ENCODE measurements at regions of chr1 and their contacts with region 1.

Region 1: DNA sequence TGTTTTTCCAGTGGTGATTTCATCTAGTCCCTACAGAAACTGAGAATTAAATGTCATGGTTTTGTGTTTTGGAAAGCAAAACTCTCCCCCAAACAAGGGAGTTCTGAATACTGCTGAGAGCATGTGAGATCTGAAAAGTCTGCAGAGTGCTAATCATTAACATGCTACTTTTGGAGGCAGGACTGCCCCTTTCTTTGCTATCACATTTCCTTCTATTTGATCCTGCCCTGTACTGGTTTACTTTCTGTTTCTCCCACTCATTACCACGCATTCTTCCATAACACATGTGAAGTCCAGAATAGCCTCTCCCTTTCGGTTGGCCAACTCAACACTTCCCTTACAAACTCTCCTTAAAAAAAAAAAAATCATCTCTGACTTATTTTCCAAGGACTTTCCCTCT is 63.6 kb downstream of the GADD45A start:
- DNase-seq: no peak

Region 2: DNA sequence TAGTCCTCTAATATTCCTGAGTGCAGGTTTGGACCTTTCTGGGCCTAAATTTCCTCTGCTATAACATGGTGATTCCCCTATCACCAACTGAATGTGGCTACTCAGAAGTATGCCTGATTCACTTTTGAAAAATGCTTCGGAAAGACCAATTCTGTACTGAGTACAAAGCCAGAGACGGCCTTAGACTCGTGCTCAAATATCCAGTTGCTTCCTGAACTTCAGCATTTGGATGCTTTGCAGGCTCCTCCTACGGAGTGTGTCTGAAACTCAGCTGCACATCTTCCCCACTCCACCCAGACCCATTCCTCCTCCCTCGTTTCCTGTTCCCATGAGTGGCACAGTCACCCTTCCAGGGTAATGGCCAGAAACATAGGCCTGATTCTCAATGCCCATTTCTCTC is 162.0 kb before region 1 on chr1:
- intact Hi-C with region 1: loop called in 1 of 2 experiments (anchors 10 kb)
- DNase-seq: no peak

Region 3: DNA sequence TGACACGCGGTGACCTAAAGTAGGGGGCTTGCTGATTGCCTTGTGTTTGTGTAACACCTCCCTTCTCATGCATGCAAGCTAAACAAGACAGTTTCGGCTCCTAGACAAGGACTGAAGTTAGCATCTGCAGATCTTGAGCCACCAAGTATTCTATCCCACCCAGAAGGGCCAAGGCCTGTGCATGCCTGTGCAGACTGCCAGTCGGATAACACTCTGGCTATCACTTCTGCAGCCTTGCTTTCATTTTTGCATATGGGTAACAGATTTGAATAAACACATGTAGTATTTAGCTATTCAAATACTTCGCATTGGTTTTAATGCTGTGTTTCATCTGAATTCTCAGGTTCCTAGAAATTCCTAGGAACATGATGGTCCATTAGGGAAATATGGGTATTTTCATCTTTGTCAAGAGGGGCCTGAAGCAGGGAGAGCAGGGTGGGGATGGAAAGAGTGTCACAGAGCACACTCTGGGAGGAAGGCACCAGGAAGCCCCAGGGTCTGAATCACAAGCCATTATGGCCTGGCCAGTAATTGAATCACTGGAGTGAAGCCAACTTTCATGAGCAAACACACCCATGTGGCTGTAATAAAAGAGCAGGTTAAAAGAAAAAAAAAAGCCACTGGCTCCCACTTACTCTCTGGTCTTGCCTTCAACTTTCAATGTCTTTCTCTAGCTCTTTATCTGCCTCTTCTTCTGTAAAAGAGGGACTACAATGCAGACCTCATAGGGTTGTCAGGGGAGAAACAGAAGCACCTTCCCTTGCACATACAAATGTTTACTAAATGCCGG is 35.4 kb before region 1 on chr1:
- intact Hi-C with region 1: loop called in 1 of 2 experiments (anchors 5 kb)
- DNase-seq: no peak

Measured in posterior vena cava (tissue), 2 donors.